Activated CD8-positive, alpha-beta memory T cell treated with anti-CD3 and anti-CD28 coated beads, Interleukin-2, amount 10 ng/mL, durations not matched to agents 7 days and 5 days (primary cell): ENCODE measurements at regions of chr10 and their contacts with region 1.

Region 1: GRCh38 chr10:30456266-30456665 is 22.3 kb downstream of the MAP3K8 start:
- DNase-seq: peak; percentile 83
- ATAC-seq: peak; percentile 81
- H3K4me3 Mint-ChIP-seq: peak overlapping the region; percentile 61
- H3K27ac Mint-ChIP-seq: peak overlapping the region; percentile 90
- H3K4me1 Mint-ChIP-seq: peaks cover 48% of the 10 kb centered on the region
- H3K27me3 Mint-ChIP-seq: no peaks in the 10 kb centered on the region

Region 2: GRCh38 chr10:30059209-30060107 is 396.8 kb before region 1 on chr10 and contains the start of gene JCAD:
- CTCF ChIA-PET with region 1: no interaction called
- DNase-seq: peak; percentile 61
- ATAC-seq: peak; percentile 91
- H3K4me3 Mint-ChIP-seq: peak within 1 kb of the TSS; percentile 57
- H3K27ac Mint-ChIP-seq: no peak within 1 kb of the TSS
- H3K4me1 Mint-ChIP-seq: peaks cover 9% of the 10 kb centered on the region
- H3K27me3 Mint-ChIP-seq: peaks cover 89% of the 10 kb centered on the region
- total RNA-seq, gene JCAD: 0.16 to 0.58 TPM

Region 3: GRCh38 chr10:30313579-30314350 is 142.5 kb before region 1 on chr10:
- CTCF ChIA-PET with region 1: no interaction called
- DNase-seq: no peak
- ATAC-seq: no peak
- H3K4me3 Mint-ChIP-seq: no peak overlapping the region
- H3K27ac Mint-ChIP-seq: no peak overlapping the region
- H3K4me1 Mint-ChIP-seq: no peaks in the 10 kb centered on the region
- H3K27me3 Mint-ChIP-seq: no peaks in the 10 kb centered on the region

Region 4: DNA sequence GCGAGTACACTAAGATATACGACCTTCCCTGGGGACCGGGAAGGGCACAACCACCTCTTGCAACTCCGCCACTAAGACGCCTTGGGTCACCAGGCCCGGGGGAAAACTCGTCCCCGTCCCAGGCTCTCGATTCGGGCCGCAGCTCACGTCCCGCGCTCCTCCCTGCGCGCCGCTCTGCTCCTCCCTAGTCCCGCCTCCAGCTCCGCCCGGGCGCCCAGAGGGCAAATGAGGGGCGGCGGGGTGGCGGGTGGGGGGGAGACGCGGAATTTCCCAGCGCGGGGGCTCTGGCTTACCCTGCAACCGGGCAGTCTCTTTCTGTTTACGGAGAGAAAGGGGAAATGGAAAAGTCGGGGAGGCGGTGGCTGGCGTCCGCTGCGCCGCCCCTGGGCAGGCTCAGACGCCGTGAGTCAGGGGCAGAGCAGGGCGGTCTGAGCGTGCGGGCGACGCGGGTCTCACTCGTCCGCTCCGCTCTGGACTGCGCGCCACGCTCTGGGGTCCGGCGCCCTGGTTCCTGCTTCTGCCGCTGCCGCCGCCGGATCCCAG is 22.5 kb before region 1 on chr10 and contains the start of gene MAP3K8:
- CTCF ChIA-PET with region 1: interaction called, 25 read pairs
- DNase-seq: peak; percentile 90
- ATAC-seq: peak; percentile 77
- H3K4me3 Mint-ChIP-seq: peak within 1 kb of the TSS; percentile 95
- H3K27ac Mint-ChIP-seq: peak within 1 kb of the TSS; percentile 95
- H3K4me1 Mint-ChIP-seq: peaks cover 48% of the 10 kb centered on the region
- H3K27me3 Mint-ChIP-seq: no peaks in the 10 kb centered on the region
- total RNA-seq, gene MAP3K8: 54.5 to 56.8 TPM

Region 5: DNA sequence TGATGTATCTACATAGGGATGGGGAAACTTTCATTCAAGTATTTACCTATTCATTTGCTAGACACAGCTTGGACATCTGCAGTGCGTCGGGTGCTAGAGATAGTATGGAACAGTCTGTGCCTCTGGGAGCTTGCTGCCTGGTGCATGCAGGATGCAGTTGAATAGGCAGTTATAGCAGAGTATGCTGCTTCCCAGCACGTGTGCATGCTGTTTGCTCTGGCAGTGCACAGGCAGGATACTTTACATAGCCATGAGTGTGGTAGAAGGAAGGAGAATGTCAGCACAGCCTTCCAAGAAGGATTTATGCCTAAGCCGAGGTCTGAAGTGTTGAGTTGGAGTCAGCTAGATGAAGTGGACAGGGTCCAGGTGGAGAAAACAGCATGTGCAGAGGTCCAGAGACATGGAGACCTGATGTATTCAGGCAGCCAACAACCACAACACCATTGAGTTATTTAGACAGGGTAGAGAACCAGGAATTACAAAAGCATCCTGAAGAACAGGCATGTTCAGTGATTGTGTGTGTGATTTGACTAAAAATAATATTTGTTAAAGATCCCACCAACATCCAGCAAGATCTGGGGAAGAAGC is 14.2 kb before region 1 on chr10:
- CTCF ChIA-PET with region 1: interaction called, 25 read pairs
- DNase-seq: no peak
- ATAC-seq: no peak
- H3K4me3 Mint-ChIP-seq: no peak overlapping the region
- H3K27ac Mint-ChIP-seq: no peak overlapping the region
- H3K4me1 Mint-ChIP-seq: peaks cover 73% of the 10 kb centered on the region
- H3K27me3 Mint-ChIP-seq: no peaks in the 10 kb centered on the region

Region 6: DNA sequence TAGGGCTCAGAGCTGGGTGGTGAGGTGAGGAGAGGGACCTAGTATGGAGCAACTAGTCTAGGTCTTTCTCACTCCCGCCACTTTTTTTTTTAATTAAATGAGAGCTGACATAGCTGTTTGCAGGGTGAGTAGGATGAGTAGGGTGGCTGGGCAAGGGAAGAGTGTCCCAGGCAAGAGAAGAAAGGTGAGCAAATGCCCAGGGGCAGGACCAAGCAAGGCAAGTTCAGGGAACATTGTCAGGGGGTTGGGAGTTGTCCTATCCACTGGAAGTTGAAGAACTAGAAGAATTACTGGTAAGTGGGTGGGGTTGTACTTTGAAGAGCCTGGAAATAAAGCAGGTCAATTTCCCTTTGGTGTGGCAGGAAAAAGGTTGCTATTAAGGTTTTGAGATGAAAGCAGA is 17.5 kb after region 1 on chr10:
- CTCF ChIA-PET with region 1: no interaction called
- DNase-seq: no peak
- ATAC-seq: no peak
- H3K4me3 Mint-ChIP-seq: no peak overlapping the region
- H3K27ac Mint-ChIP-seq: no peak overlapping the region
- H3K4me1 Mint-ChIP-seq: peaks cover 22% of the 10 kb centered on the region
- H3K27me3 Mint-ChIP-seq: peaks cover 3% of the 10 kb centered on the region

Region 7: DNA sequence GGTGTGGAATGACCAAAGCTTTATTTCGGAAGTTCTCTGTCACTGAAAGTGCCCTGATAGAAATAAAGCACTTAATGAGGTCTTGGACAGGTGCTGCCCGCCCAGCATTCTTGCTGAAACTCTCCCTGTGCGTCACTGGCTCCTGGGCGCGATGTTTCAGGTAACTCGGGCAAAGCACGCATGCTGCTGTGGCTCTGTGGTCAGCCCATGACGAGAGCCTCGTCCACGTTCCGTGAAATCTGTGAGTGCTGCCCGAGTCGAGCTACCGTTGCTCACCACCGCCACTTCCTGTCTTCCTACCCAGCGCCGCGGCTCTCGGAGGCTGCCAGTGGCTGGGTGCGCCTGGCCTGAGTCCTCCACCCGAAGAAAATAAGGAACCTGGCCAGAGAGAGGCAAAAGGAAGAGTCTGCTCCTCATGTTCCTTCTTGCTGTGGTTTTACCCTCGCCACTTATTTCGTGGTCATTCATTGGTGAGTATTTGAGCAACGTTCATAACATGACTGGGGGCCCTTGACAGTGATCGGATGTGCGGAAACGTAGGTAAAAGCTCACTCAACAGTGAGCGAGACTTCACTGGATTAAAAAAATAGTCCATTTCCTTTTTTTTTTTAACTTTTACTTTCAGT is 73.2 kb after region 1 on chr10:
- CTCF ChIA-PET with region 1: interaction called, 18 read pairs
- DNase-seq: peak; percentile 96
- ATAC-seq: peak; percentile 87
- H3K4me3 Mint-ChIP-seq: peak overlapping the region; percentile 78
- H3K27ac Mint-ChIP-seq: peak overlapping the region; percentile 99
- H3K4me1 Mint-ChIP-seq: peaks cover 79% of the 10 kb centered on the region
- H3K27me3 Mint-ChIP-seq: no peaks in the 10 kb centered on the region

Region 8: DNA sequence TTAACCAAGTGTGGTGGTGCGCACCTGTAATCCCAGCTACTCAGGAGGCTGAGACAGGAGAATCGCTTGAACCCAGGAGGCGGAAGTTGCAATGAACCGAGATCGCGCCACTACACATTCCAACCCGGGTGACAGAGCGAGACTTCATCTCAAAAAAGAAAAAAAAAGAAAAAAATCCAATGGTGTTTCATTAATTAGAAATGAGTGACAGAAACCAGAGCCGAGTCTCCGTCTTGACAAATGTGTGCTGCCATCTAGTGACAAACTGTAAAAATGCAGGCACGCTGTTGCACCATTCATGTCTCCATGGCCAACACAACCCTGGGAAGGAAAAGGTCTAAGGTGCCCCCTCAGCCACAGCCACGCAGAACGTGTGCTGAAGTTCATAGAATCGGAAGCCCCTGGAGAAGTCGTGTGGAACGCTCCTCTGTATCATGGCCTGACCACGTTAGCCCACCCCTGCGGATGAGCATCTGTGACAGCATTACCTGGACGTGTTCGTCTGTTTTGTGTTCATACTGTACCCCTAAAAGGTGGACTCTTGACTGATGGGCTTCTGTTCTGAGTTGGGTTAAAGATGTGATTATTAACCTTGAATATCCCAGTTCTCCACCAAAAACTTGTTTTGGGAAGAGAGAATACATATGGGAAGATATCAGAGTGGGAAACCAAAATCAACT is 78.3 kb after region 1 on chr10:
- CTCF ChIA-PET with region 1: interaction called, 18 read pairs
- DNase-seq: peak; percentile 86
- ATAC-seq: peak; percentile 47
- H3K4me3 Mint-ChIP-seq: no peak overlapping the region
- H3K27ac Mint-ChIP-seq: no peak overlapping the region
- H3K4me1 Mint-ChIP-seq: peaks cover 52% of the 10 kb centered on the region
- H3K27me3 Mint-ChIP-seq: no peaks in the 10 kb centered on the region